ENCODE measurements at regions of chr17 and their contacts with region 1.

Region 1: GRCh38 chr17:43170766-43171585 is at the start of gene NBR1:
- DNase-seq: peak; percentile 88 to 99 (median 95)
- ATAC-seq: peak; percentile 79
- H3K4me3 ChIP-seq: peak within 1 kb of the TSS; percentile 84 to 85
- H3K4me3 Mint-ChIP-seq: no peak within 1 kb of the TSS
- H3K27ac ChIP-seq: peak within 1 kb of the TSS; percentile 97 to 98
- H3K27ac Mint-ChIP-seq: no peak within 1 kb of the TSS
- H3K4me1 ChIP-seq: peaks cover 35% of the 10 kb centered on the region
- H3K4me1 Mint-ChIP-seq: peaks cover 33% of the 10 kb centered on the region
- H3K27me3 ChIP-seq: no peaks in the 10 kb centered on the region
- H3K27me3 Mint-ChIP-seq: no peaks in the 10 kb centered on the region
- CTCF ChIP-seq: no peak
- total RNA-seq, gene NBR1: 19.1 to 19.4 TPM

Region 2: GRCh38 chr17:42744806-42745617 is 426.0 kb before region 1 on chr17 and contains the start of gene EZH1:
- CTCF ChIA-PET with region 1: no interaction called
- POLR2A ChIA-PET with region 1: no interaction called
- intact Hi-C with region 1: no loop called
- DNase-seq: peak; percentile 82 to 96 (median 90)
- ATAC-seq: peak; percentile 92
- H3K4me3 ChIP-seq: peak within 1 kb of the TSS; percentile 72 to 73
- H3K4me3 Mint-ChIP-seq: peak within 1 kb of the TSS; percentile 98
- H3K27ac ChIP-seq: peak within 1 kb of the TSS; percentile 62 to 79
- H3K27ac Mint-ChIP-seq: peak within 1 kb of the TSS; percentile 96
- H3K4me1 ChIP-seq: peaks cover 17% of the 10 kb centered on the region
- H3K4me1 Mint-ChIP-seq: peaks cover 31% of the 10 kb centered on the region
- H3K27me3 ChIP-seq: peaks cover 0 to 4% of the 10 kb centered on the region in 2 experiments
- H3K27me3 Mint-ChIP-seq: peaks cover 13% of the 10 kb centered on the region
- CTCF ChIP-seq: no peak
- total RNA-seq, gene EZH1: 59.2 to 63.4 TPM

Region 3: GRCh38 chr17:42819944-42820535 is 350.9 kb before region 1 on chr17:
- CTCF ChIA-PET with region 1: no interaction called
- POLR2A ChIA-PET with region 1: no interaction called
- intact Hi-C with region 1: loop called in 1 of 2 experiments (anchors 1 kb)
- DNase-seq: peak; percentile 26 to 74 (median 63)
- ATAC-seq: peak; percentile 24
- H3K4me3 ChIP-seq: no peak overlapping the region
- H3K4me3 Mint-ChIP-seq: no peak overlapping the region
- H3K27ac ChIP-seq: no peak overlapping the region
- H3K27ac Mint-ChIP-seq: no peak overlapping the region
- H3K4me1 ChIP-seq: peaks cover 13% of the 10 kb centered on the region
- H3K4me1 Mint-ChIP-seq: peaks cover 34% of the 10 kb centered on the region
- H3K27me3 ChIP-seq: no peaks in the 10 kb centered on the region
- H3K27me3 Mint-ChIP-seq: no peaks in the 10 kb centered on the region
- CTCF ChIP-seq: peak; percentile 73

Region 4: GRCh38 chr17:43024407-43025289 is 146.3 kb before region 1 on chr17 and contains the start of gene RND2:
- CTCF ChIA-PET with region 1: no interaction called
- POLR2A ChIA-PET with region 1: interaction called, 3 read pairs
- intact Hi-C with region 1: loop called (anchors 1 to 2 kb)
- DNase-seq: peak; percentile 56 to 90 (median 81)
- ATAC-seq: peak; percentile 67
- H3K4me3 ChIP-seq: peak within 1 kb of the TSS; percentile 70 to 99
- H3K4me3 Mint-ChIP-seq: peak within 1 kb of the TSS; percentile 90
- H3K27ac ChIP-seq: peak within 1 kb of the TSS; percentile 1 to 72
- H3K27ac Mint-ChIP-seq: peak within 1 kb of the TSS; percentile 83
- H3K4me1 ChIP-seq: peaks cover 22% of the 10 kb centered on the region
- H3K4me1 Mint-ChIP-seq: peaks cover 26% of the 10 kb centered on the region
- H3K27me3 ChIP-seq: no peaks in the 10 kb centered on the region
- H3K27me3 Mint-ChIP-seq: no peaks in the 10 kb centered on the region
- CTCF ChIP-seq: peak; percentile 45
- total RNA-seq, gene RND2: 0.30 TPM in 1 of 2 experiments, not detected in the other

Region 5: GRCh38 chr17:43316522-43317142 is 145.7 kb after region 1 on chr17:
- CTCF ChIA-PET with region 1: interaction called, 4 read pairs
- POLR2A ChIA-PET with region 1: interaction called, 27 read pairs
- intact Hi-C with region 1: no loop called
- DNase-seq: peak in 5 of 9 experiments; percentile 14 to 59 (median 49)
- ATAC-seq: no peak
- H3K4me3 ChIP-seq: no peak overlapping the region
- H3K4me3 Mint-ChIP-seq: peak overlapping the region; percentile 6
- H3K27ac ChIP-seq: no peak overlapping the region
- H3K27ac Mint-ChIP-seq: peak overlapping the region; percentile 41
- H3K4me1 ChIP-seq: no peaks in the 10 kb centered on the region
- H3K4me1 Mint-ChIP-seq: peaks cover 15% of the 10 kb centered on the region
- H3K27me3 ChIP-seq: no peaks in the 10 kb centered on the region
- H3K27me3 Mint-ChIP-seq: no peaks in the 10 kb centered on the region
- CTCF ChIP-seq: no peak

Region 6: GRCh38 chr17:43367737-43368242 is 196.8 kb after region 1 on chr17:
- CTCF ChIA-PET with region 1: no interaction called
- POLR2A ChIA-PET with region 1: interaction called, 17 read pairs
- intact Hi-C with region 1: loop called in 1 of 2 experiments (anchors 2 kb)
- DNase-seq: peak in 5 of 9 experiments; percentile 16 to 86 (median 24)
- ATAC-seq: peak; percentile 57
- H3K4me3 ChIP-seq: peak overlapping the region; percentile 73 to 76
- H3K4me3 Mint-ChIP-seq: peak overlapping the region; percentile 97
- H3K27ac ChIP-seq: peak overlapping the region; percentile 97 to 98
- H3K27ac Mint-ChIP-seq: peak overlapping the region; percentile 100
- H3K4me1 ChIP-seq: peaks cover 20% of the 10 kb centered on the region
- H3K4me1 Mint-ChIP-seq: peaks cover 38% of the 10 kb centered on the region
- H3K27me3 ChIP-seq: no peaks in the 10 kb centered on the region
- H3K27me3 Mint-ChIP-seq: no peaks in the 10 kb centered on the region
- CTCF ChIP-seq: no peak